Sigmoid colon (tissue), 7 donors: ENCODE measurements at regions of chr11 and their contacts with region 1.

Region 1: DNA sequence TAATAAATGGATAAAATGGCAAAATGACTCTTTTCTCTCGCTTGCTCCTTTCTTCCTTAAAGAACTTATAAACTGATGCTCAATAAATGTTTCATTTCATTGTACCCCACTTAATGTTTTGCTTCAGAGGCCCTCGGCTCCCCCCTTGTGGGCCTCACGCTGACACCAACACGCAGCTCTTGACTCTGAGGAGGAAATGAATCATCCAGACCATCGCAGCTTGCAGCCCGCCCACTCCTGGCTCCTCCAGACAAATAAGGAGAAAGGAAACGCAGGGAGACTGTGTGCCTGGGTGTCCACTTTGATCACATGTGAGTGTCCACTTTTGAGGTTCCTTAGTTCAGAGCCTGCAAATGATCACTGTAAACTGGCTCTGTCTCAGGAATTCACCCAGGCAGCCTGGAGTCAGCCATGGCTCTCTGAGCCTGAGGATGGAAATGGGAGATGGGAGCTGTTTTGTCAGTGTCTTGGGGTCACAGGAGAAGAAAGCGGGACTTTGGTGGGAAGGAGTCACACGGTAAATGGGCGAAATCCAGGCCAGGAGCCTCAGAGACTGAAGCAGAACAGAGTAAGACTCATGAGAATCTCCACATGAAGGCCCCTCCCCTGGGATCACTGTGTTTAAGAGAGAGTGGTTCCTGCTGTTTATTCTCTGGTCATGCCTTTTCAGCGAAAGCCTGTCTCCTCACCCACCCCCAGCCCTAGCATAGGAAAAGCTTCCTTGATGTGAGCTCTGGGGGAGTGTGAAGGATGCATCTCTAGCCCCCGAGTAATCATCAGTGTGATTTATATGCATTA is 96.5 kb downstream of the CWC15 start:
- DNase-seq: peak; percentile 95
- H3K4me3 ChIP-seq: no peak overlapping the region
- H3K27ac ChIP-seq: peak overlapping the region; percentile 56 to 87 (median 72)
- H3K4me1 ChIP-seq: peaks cover 0 to 64% (median 49%) of the 10 kb centered on the region in 4 donors
- H3K27me3 ChIP-seq: no peaks in the 10 kb centered on the region
- CTCF ChIP-seq: peak in 2 of 4 experiments; percentile 12 to 23
- EP300 ChIP-seq: no peak
- POLR2A ChIP-seq: no peak

Region 2: DNA sequence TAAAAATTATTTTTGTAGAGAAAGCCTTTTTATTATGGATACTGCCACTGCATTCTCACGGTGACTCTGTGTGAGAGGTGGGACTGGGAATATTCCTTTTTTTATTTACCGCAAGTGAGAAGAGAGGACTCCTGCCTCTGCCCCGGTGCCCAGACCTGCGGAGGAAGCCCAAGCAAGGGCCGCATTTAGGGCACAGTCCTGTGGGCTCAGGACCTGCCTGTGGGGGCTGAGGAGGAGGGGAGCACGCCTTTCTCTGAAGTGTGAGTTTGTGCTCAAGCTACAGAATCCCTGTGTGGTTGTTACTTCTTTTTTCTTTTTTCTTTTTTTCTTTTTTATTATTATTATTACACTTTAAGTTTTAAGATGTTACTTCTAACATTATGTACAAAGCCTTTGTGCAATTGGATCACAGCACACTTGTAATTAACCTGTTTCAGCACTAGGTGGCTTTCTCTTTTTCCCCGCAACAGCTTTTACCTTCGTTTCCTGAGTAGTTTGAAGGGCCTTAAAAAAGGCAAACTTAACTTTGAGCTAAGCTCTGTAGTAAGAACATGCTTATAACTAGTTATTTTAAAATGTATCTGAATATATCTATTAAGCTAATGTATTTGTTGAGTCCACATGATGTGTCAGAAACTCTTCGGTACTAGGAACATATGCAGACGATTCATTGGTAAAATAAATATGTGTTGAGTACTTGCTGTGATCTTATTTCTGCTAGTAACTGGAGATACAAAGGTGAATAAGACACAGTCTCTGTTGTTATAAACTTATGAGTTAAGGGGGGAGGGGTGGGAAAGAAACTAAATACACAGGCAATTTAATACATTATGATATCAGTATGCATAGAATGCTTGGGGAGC is 90.3 kb before region 1 on chr11:
- intact Hi-C with region 1: loop called (anchors 5 kb)
- DNase-seq: no peak
- H3K4me3 ChIP-seq: no peak overlapping the region
- H3K27ac ChIP-seq: peak overlapping the region; percentile 12 to 55 (median 38)
- H3K4me1 ChIP-seq: peaks cover 0 to 98% (median 92%) of the 10 kb centered on the region in 4 donors
- H3K27me3 ChIP-seq: no peaks in the 10 kb centered on the region
- CTCF ChIP-seq: peak; percentile 34 to 60 (median 48)
- EP300 ChIP-seq: no peak
- POLR2A ChIP-seq: no peak

Region 3: DNA sequence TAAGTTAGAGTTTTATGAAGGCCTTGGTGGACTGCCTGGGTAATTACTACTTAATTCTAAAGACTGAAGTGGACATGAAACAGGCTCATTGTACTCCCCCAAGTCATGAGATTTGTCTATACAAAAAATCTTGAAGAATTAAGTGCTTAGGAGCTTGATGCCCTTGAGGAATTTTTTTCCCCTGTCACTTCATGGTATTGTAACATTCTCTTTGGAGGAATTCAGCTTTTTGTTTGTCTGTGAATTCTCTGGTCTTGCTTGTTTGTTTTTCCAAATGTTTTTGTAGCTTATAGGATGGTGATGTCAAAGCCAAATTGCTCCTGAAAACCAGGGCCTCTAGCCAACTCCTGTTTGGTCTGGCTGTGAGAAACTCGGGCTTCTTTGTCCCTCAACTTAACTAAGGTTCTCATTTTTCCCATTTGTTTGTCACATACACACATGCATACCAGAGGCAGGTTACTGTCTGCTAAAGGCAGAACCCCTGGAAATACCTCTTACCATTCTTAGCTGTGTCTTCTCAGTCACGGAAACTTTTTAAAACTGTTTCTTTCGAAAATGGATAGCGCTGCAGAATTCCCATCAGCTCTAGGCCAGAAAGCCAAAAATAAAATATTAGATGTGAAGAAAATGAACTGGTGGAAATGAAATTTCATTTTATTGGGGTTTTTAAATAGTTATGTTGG is 41.8 kb before region 1 on chr11:
- intact Hi-C with region 1: loop called (anchors 5 kb)
- DNase-seq: no peak
- H3K4me3 ChIP-seq: no peak overlapping the region
- H3K27ac ChIP-seq: peak overlapping the region; percentile 46 to 78 (median 56)
- H3K4me1 ChIP-seq: peaks cover 0 to 75% (median 57%) of the 10 kb centered on the region in 4 donors
- H3K27me3 ChIP-seq: no peaks in the 10 kb centered on the region
- CTCF ChIP-seq: no peak
- EP300 ChIP-seq: no peak
- POLR2A ChIP-seq: no peak